HepG2 (cell line): ENCODE measurements at regions of chr5 and their contacts with region 1.

Region 1: GRCh38 chr5:134436523-134437339 is 25.1 kb upstream of the CDKN2AIPNL start:
- DNase-seq: peak; percentile 64
- ATAC-seq: peak; percentile 79
- H3K4me3 ChIP-seq: peak overlapping the region; percentile 45 to 72 (median 46)
- H3K27ac ChIP-seq: peak overlapping the region; percentile 47
- H3K4me1 ChIP-seq: peaks cover 72% of the 10 kb centered on the region
- H3K27me3 ChIP-seq: peaks cover 2 to 11% of the 10 kb centered on the region in 2 experiments; a peak in 4 of 5 replicates
- CTCF ChIP-seq: no peak
- EP300 ChIP-seq: no peak
- POLR2A ChIP-seq: no peak
- RAD21 ChIP-seq: no peak

Region 2: GRCh38 chr5:134417707-134418106 is 19.0 kb before region 1 on chr5:
- CTCF ChIA-PET with region 1: no interaction called
- POLR2A ChIA-PET with region 1: interaction called, 31 read pairs
- in situ Hi-C with region 1: no loop called
- intact Hi-C with region 1: no loop called
- DNase-seq: no peak
- ATAC-seq: no peak
- H3K4me3 ChIP-seq: no peak overlapping the region; a peak in 1 of 6 replicates
- H3K27ac ChIP-seq: peak overlapping the region; percentile 96
- H3K4me1 ChIP-seq: peaks cover 65% of the 10 kb centered on the region
- H3K27me3 ChIP-seq: no peaks in the 10 kb centered on the region
- CTCF ChIP-seq: no peak
- EP300 ChIP-seq: peak in 1 of 2 experiments; percentile 33; a peak in 1 of 4 replicates
- POLR2A ChIP-seq: no peak
- RAD21 ChIP-seq: no peak

Region 3: DNA sequence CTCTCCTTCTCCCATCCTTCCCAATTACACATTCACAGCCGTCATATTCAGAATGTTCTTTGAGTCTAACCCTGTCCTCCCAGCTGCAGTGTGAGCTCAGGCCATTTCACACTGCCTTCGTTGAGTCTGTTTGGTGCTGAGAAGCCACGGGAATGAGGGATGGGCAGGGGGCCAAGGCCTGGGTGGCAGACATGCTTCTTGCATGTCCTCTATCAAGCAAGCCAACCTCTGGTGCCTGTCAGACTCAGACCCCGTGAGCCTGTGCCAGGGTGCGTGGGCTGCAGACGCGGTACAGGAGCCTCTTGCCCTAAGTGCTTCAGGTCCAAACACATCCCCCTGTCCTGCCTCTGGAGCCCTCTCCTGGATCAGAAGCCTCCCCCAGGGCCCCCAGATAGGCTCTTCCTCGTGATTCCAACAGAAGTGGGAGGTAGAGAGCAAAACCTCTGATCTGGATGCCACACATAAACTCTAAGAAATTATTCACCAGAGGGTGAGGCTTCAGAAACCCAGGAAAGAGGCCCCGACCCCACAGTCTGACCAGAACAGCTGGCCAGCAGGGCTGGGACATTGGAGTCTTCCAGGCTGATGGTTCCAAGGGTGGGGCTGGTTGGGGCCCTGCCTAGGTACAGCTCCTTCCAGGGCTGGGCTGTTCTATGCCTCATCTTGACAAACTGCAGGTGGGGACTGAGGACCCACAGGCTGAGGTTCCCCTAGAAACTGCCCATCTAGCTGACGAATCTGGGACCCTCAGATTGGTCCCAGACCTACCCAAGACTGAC is 21.7 kb after region 1 on chr5:
- CTCF ChIA-PET with region 1: no interaction called
- POLR2A ChIA-PET with region 1: no interaction called
- in situ Hi-C with region 1: no loop called
- intact Hi-C with region 1: no loop called
- DNase-seq: no peak
- ATAC-seq: peak; percentile 32
- H3K4me3 ChIP-seq: no peak overlapping the region
- H3K27ac ChIP-seq: no peak overlapping the region
- H3K4me1 ChIP-seq: peaks cover 17% of the 10 kb centered on the region; the same call in 1 of the 2 replicates
- H3K27me3 ChIP-seq: peaks cover 0 to 14% of the 10 kb centered on the region in 2 experiments; a peak in 3 of 5 replicates
- CTCF ChIP-seq: no peak
- EP300 ChIP-seq: no peak
- POLR2A ChIP-seq: no peak
- RAD21 ChIP-seq: no peak

Region 4: DNA sequence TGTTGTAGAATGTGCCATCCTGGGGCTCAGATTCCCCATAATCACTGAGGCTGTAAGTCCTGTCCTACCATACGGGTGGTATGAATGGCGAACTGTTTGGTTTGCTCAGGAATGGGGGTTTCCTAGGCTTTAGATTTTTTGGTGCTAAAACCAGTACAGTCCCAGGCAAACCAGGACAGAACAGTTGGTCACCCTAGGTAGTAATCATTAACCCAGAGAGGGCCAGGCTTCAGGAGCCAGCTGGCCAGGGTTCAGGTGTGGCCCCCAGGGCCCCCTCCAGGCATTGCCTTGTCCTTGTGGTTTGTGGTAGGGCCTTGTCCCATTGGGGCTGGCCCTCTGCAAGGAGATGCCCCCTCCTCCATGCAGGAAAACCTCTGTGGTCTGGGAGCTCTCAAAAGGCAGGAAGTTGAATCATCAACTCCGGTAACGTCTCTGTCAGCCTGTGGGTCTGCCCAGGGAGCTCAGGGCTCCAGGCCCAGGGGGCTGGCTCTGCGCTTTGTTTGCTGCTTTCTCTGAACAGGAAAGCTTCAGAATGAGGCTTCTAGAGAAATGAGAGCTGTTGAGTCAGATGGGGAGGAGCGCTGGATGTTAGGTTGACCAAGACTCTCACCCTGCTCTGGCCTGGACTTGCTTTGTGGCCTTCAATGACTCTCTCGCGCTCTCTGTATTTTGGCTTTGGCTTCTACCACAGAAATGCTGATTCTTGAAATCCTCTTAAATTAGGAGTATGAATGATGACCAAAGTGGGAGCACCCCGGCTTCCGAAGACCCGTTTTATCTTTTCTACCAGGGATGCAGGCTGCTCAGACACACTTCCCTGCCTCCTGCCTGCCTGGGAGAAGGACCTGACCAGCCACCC is 66.6 kb after region 1 on chr5:
- CTCF ChIA-PET with region 1: no interaction called
- POLR2A ChIA-PET with region 1: interaction called, 10 read pairs
- in situ Hi-C with region 1: no loop called
- intact Hi-C with region 1: no loop called
- DNase-seq: peak; percentile 93
- ATAC-seq: peak; percentile 72
- H3K4me3 ChIP-seq: peak overlapping the region; percentile 27 to 62 (median 41)
- H3K27ac ChIP-seq: peak overlapping the region; percentile 89
- H3K4me1 ChIP-seq: peaks cover 71% of the 10 kb centered on the region
- H3K27me3 ChIP-seq: no peaks in the 10 kb centered on the region; a peak in 1 of 5 replicates
- CTCF ChIP-seq: peak; percentile 34
- EP300 ChIP-seq: no peak; a peak in 1 of 4 replicates
- POLR2A ChIP-seq: peak in 1 of 2 experiments; percentile 78; a peak in 2 of 4 replicates
- RAD21 ChIP-seq: peak; percentile 30; the same call in 1 of the 2 replicates

Region 5: GRCh38 chr5:134511788-134512650 is 75.3 kb after region 1 on chr5:
- CTCF ChIA-PET with region 1: no interaction called
- POLR2A ChIA-PET with region 1: interaction called, 11 read pairs
- in situ Hi-C with region 1: no loop called
- intact Hi-C with region 1: no loop called
- DNase-seq: peak; percentile 74
- ATAC-seq: peak; percentile 84
- H3K4me3 ChIP-seq: peak overlapping the region; percentile 12 to 60 (median 24); a peak in 5 of 6 replicates
- H3K27ac ChIP-seq: peak overlapping the region; percentile 71
- H3K4me1 ChIP-seq: peaks cover 73% of the 10 kb centered on the region
- H3K27me3 ChIP-seq: no peaks in the 10 kb centered on the region
- CTCF ChIP-seq: peak; percentile 77
- EP300 ChIP-seq: peak in 1 of 2 experiments; percentile 40; a peak in 1 of 4 replicates
- POLR2A ChIP-seq: peak in 1 of 2 experiments; percentile 61; a peak in 1 of 4 replicates
- RAD21 ChIP-seq: peak; percentile 57; the same call in 1 of the 2 replicates